Left ventricle myocardium superior (tissue), 1 donor: ENCODE measurements at regions of chr1 and their contacts with region 1.

Region 1: DNA sequence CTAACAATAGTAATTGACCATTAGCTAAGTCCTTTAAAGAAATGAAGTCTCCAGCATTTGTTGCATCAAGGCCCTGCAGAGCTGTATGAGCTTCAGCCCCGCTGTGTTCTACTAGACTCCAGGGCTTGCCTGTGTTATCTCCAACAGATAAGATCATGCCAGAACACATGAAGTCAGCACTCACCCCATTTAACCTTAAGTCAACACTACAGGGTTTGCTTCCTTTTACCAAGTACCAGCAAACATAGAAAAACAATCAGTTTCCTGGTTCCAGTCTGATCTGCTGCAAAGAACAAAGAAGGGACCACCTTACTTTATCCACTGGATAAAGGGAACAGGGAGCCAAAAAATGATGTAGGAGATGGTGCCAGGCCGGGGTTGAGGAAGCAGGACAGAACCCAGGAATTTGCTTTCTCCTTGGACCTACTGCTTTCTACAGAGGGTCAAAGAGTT is 41.3 kb upstream of the ENAH start:
- DNase-seq: peak; percentile 59
- ATAC-seq: peak; percentile 97

Region 2: GRCh38 chr1:225766967-225767633 is 72.9 kb after region 1 on chr1:
- intact Hi-C with region 1: loop called (anchors 10 kb)
- DNase-seq: peak; percentile 42
- ATAC-seq: peak; percentile 51